Activated CD8-positive, alpha-beta T cell treated with anti-CD3 and anti-CD28 coated beads for 36 hours (primary cell): ENCODE measurements at regions of chr1 and their contacts with region 1.

Region 1: DNA sequence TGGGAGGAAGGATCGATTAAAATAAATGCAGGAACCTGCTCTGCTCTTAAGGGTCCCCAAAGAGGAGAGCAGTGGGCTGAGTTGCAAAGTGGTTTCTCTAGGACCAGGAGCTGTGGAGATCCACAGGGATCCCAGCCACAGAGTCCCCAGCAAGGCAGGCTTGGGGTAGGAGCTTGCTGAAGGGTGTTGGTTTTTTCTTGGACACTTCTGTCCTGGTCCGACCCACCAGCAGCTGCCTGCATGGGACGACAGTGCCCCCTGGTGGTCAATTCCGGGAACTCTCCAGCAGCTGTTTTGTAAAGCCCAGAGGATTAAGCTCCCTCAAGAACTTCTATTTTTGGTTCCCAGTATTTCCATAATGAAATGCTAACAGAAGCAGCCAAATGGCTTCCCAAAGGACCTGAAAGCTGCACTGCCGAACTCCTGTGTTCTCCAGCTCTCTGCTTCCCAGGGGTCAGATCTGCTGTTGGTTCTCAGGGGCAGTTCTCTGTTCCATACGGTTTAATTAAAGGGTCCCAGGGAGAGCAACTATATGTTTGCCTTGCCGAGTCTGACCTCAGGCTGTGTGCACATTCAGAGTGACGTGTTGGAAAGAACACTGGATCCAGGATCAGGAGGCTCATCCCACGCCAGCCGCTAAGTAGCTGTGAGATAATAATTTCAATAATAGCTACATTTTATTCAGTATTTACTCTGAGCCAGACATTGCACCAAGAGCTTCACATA is 23.2 kb downstream of the NENF start:
- DNase-seq: peak; percentile 91
- ATAC-seq: peak; percentile 78
- H3K4me3 Mint-ChIP-seq: no peak overlapping the region
- H3K27ac Mint-ChIP-seq: no peak overlapping the region
- H3K4me1 Mint-ChIP-seq: peaks cover 4% of the 10 kb centered on the region
- H3K27me3 Mint-ChIP-seq: no peaks in the 10 kb centered on the region
- CTCF ChIP-seq: peak; percentile 99

Region 2: GRCh38 chr1:211675230-211676105 is 780.5 kb before region 1 on chr1 and contains the start of gene NEK2:
- CTCF ChIA-PET with region 1: interaction called, 76 read pairs
- POLR2A ChIA-PET with region 1: no interaction called
- intact Hi-C with region 1: loop called (anchors 5 kb)
- DNase-seq: peak; percentile 96
- ATAC-seq: peak; percentile 95
- H3K4me3 Mint-ChIP-seq: peak within 1 kb of the TSS; percentile 92
- H3K27ac Mint-ChIP-seq: peak within 1 kb of the TSS; percentile 69
- H3K4me1 Mint-ChIP-seq: peaks cover 9% of the 10 kb centered on the region
- H3K27me3 Mint-ChIP-seq: no peaks in the 10 kb centered on the region
- CTCF ChIP-seq: no peak
- total RNA-seq, gene NEK2: 29.9 to 30.0 TPM

Region 3: DNA sequence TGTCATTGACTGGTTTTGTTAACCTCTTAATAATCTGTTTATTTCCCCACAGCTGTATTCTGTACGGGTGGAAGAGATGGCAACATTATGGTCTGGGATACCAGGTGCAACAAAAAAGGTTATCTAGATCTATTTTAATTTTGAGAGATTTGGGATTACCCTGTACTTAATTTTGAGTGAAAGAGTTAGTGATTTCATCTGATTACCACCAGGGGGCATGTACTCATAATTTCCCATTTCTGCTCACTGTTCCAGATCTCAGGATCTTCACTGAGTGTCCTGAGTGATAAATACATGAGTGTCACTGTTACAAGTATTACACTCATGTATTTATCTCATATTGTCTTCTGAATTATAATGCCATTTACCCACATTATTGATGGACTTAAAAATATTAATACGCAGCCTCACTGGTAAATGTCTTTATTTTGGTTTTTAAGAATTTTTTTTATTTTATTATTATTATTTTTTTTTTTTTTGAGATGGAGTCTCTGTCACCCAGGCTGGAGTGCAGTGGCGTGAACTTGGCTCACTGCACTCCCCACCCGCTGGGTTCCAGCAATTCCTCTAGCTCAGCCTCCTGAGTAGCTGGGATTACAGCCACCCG is 393.0 kb before region 1 on chr1:
- CTCF ChIA-PET with region 1: interaction called, 44 read pairs
- POLR2A ChIA-PET with region 1: no interaction called
- intact Hi-C with region 1: loop called (anchors 10 kb)
- DNase-seq: no peak
- ATAC-seq: peak; percentile 53
- H3K4me3 Mint-ChIP-seq: no peak overlapping the region
- H3K27ac Mint-ChIP-seq: no peak overlapping the region
- H3K4me1 Mint-ChIP-seq: no peaks in the 10 kb centered on the region
- H3K27me3 Mint-ChIP-seq: no peaks in the 10 kb centered on the region
- CTCF ChIP-seq: peak; percentile 87

Region 4: DNA sequence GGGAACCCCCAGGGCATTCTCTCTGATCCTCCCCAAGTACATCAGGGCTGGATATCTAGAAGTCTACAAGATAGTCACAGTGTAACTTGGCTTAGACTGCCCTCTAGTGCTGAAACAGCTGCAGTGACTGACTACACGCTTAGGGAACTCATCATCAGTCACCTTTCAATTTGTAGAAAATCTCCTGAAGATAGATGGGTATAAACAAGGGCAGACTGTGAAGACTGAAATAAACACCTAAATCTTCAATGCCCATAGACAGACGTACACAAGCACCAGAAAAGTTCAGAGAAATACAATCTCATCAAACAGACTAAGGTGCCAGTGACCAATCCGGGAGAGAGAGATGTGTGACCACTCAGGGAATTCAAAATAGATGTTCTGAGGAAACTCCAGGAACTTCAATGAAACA is 87.9 kb before region 1 on chr1:
- CTCF ChIA-PET with region 1: interaction called, 134 read pairs
- POLR2A ChIA-PET with region 1: no interaction called
- intact Hi-C with region 1: loop called (anchors 5 kb)
- DNase-seq: peak; percentile 73
- ATAC-seq: peak; percentile 95
- H3K4me3 Mint-ChIP-seq: no peak overlapping the region
- H3K27ac Mint-ChIP-seq: peak overlapping the region; percentile 14
- H3K4me1 Mint-ChIP-seq: no peaks in the 10 kb centered on the region
- H3K27me3 Mint-ChIP-seq: no peaks in the 10 kb centered on the region
- CTCF ChIP-seq: peak; percentile 77

Region 5: GRCh38 chr1:212440419-212440818 is 15.5 kb before region 1 on chr1:
- CTCF ChIA-PET with region 1: interaction called, 55 read pairs
- POLR2A ChIA-PET with region 1: interaction called, 4 read pairs
- intact Hi-C with region 1: no loop called
- DNase-seq: no peak
- ATAC-seq: no peak
- H3K4me3 Mint-ChIP-seq: no peak overlapping the region
- H3K27ac Mint-ChIP-seq: no peak overlapping the region
- H3K4me1 Mint-ChIP-seq: peaks cover 15% of the 10 kb centered on the region
- H3K27me3 Mint-ChIP-seq: no peaks in the 10 kb centered on the region
- CTCF ChIP-seq: no peak

Region 6: GRCh38 chr1:212641956-212642355 is 186.0 kb after region 1 on chr1:
- CTCF ChIA-PET with region 1: interaction called, 10 read pairs
- POLR2A ChIA-PET with region 1: no interaction called
- intact Hi-C with region 1: no loop called
- DNase-seq: no peak
- ATAC-seq: no peak
- H3K4me3 Mint-ChIP-seq: no peak overlapping the region
- H3K27ac Mint-ChIP-seq: no peak overlapping the region
- H3K4me1 Mint-ChIP-seq: peaks cover 10% of the 10 kb centered on the region
- H3K27me3 Mint-ChIP-seq: peaks cover 3% of the 10 kb centered on the region
- CTCF ChIP-seq: no peak